IMR-90 (cell line): ENCODE measurements at regions of chr11 and their contacts with region 1.

Region 1: GRCh38 chr11:8934749-8935478 is 2.2 kb upstream of the C11orf16 start:
- DNase-seq: peak; percentile 90
- ATAC-seq: peak; percentile 92
- H3K4me3 ChIP-seq: peak overlapping the region; percentile 11; the same call in 1 of the 2 replicates
- H3K27ac ChIP-seq: peak overlapping the region; percentile 33
- H3K4me1 ChIP-seq: peaks cover 5% of the 10 kb centered on the region
- H3K27me3 ChIP-seq: no peaks in the 10 kb centered on the region
- CTCF ChIP-seq: no peak
- POLR2A ChIP-seq: no peak
- RAD21 ChIP-seq: no peak

Region 2: GRCh38 chr11:8533332-8533731 is 401.6 kb before region 1 on chr11:
- CTCF ChIA-PET with region 1: no interaction called
- POLR2A ChIA-PET with region 1: no interaction called
- dilution Hi-C with region 1: no loop called
- in situ Hi-C with region 1: no loop called
- intact Hi-C with region 1: no loop called
- DNase-seq: no peak
- ATAC-seq: no peak
- H3K4me3 ChIP-seq: no peak overlapping the region
- H3K27ac ChIP-seq: no peak overlapping the region
- H3K4me1 ChIP-seq: no peaks in the 10 kb centered on the region
- H3K27me3 ChIP-seq: no peaks in the 10 kb centered on the region
- CTCF ChIP-seq: no peak
- POLR2A ChIP-seq: no peak
- RAD21 ChIP-seq: no peak

Region 3: GRCh38 chr11:8917157-8917825 is 17.6 kb before region 1 on chr11:
- CTCF ChIA-PET with region 1: no interaction called
- POLR2A ChIA-PET with region 1: no interaction called
- dilution Hi-C with region 1: no loop called
- in situ Hi-C with region 1: no loop called
- intact Hi-C with region 1: loop called (anchors 2 kb)
- DNase-seq: peak; percentile 93
- ATAC-seq: peak; percentile 90
- H3K4me3 ChIP-seq: no peak overlapping the region
- H3K27ac ChIP-seq: peak overlapping the region; percentile 93
- H3K4me1 ChIP-seq: peaks cover 20% of the 10 kb centered on the region
- H3K27me3 ChIP-seq: no peaks in the 10 kb centered on the region
- CTCF ChIP-seq: peak; percentile 18; the same call in 1 of the 2 replicates
- POLR2A ChIP-seq: no peak
- RAD21 ChIP-seq: no peak